ENCODE measurements at regions of chr16 and their contacts with region 1.

Region 1: DNA sequence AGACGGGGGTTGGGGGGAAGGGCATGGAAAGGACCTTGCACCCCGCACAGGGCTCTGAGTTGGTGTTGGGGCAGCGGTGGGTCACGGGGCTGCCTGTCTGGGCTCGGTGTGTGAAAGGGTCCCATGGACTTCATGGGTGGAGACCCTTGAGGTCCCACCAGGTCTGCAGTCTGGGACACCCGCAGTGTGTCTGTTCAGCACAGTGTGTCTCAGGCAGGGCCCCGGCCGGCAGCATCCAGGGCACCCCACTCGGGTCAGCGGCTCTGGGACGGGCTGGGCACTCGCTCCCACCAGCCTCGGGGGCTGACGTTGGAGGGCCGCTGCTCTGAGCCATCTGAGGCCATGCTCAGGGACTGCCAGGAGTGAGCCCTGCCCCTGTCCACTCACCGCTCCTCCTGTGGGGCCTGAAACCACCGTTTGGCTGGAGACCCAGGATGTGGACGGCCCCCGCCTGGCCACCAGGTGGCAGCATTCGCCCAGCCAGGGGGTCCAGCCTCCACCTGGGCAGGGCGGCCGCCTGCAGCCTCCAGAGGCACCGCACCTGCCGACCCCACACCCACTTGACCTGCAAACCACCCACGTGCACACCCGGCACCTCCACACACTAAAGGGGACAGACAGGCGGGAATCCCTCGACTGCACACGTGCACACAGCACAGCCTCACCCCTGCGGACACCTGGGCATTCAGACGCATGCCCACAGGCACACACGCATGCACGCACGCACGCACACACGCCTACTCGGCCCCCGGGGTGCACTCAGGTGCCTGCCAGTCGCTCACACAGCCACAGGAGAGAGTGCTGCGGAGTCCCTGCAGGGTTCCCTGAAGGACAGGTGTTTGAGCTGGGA is 10.1 kb upstream of the ZFPM1 start:
- DNase-seq: peak; percentile 83 to 91
- H3K4me3 ChIP-seq: no peak overlapping the region
- H3K27ac ChIP-seq: no peak overlapping the region
- H3K4me1 ChIP-seq: peaks cover 0 to 15% (median 10%) of the 10 kb centered on the region in 4 donors
- H3K27me3 ChIP-seq: peaks cover 0 to 50% (median 0%) of the 10 kb centered on the region in 3 donors
- CTCF ChIP-seq: peak in 5 of 7 experiments; percentile 89 to 99 (median 95)
- EP300 ChIP-seq: no peak
- POLR2A ChIP-seq: no peak

Region 2: DNA sequence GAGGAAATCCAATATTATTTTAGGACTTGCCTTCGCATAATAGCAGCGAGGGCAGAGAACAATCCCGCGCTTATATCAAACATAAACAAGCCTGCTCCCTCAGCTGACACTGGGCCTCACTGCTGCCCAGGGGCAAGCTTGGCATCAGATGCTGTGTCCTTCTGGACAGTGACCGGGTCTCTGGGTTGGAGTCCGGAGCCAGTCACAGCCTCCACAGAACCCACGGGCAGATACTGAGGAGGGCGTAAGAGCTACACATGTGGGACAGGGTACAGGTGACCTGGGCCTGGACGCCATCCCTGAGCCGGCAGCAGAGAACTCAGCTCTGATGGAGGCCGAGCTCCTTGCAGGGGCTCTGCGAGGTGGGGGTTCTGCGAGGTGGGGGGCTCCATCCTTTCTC is 74.9 kb before region 1 on chr16:
- intact Hi-C with region 1: no loop called
- DNase-seq: no peak
- H3K4me3 ChIP-seq: no peak overlapping the region
- H3K27ac ChIP-seq: no peak overlapping the region
- H3K4me1 ChIP-seq: no peaks in the 10 kb centered on the region
- H3K27me3 ChIP-seq: peaks cover 0 to 8% (median 0%) of the 10 kb centered on the region in 3 donors
- CTCF ChIP-seq: no peak
- EP300 ChIP-seq: no peak
- POLR2A ChIP-seq: no peak

Region 3: GRCh38 chr16:88505405-88506082 is 62.6 kb after region 1 on chr16:
- intact Hi-C with region 1: no loop called
- DNase-seq: peak; percentile 88 to 95
- H3K4me3 ChIP-seq: no peak overlapping the region
- H3K27ac ChIP-seq: peak overlapping the region; percentile 75 to 96 (median 87)
- H3K4me1 ChIP-seq: peaks cover 61 to 94% (median 85%) of the 10 kb centered on the region in 4 donors
- H3K27me3 ChIP-seq: peaks cover 0 to 16% (median 0%) of the 10 kb centered on the region in 3 donors
- CTCF ChIP-seq: peak in 5 of 7 experiments; percentile 51 to 77 (median 72)
- EP300 ChIP-seq: no peak
- POLR2A ChIP-seq: no peak

Region 4: GRCh38 chr16:88527186-88527936 is 84.4 kb after region 1 on chr16:
- intact Hi-C with region 1: loop called (anchors 10 kb)
- DNase-seq: peak; percentile 88 to 92
- H3K4me3 ChIP-seq: no peak overlapping the region
- H3K27ac ChIP-seq: peak overlapping the region; percentile 34 to 77 (median 67)
- H3K4me1 ChIP-seq: peaks cover 50 to 74% (median 61%) of the 10 kb centered on the region in 4 donors
- H3K27me3 ChIP-seq: peaks cover 0 to 43% (median 3%) of the 10 kb centered on the region in 3 donors
- CTCF ChIP-seq: peak in 5 of 7 experiments; percentile 80 to 93 (median 91)
- EP300 ChIP-seq: no peak
- POLR2A ChIP-seq: no peak

Region 5: GRCh38 chr16:88561485-88562369 is 118.8 kb after region 1 on chr16:
- intact Hi-C with region 1: loop called (anchors 2 kb)
- DNase-seq: peak; percentile 52 to 74
- H3K4me3 ChIP-seq: peak overlapping the region in 2 of 4 donors; percentile 26 to 31
- H3K27ac ChIP-seq: peak overlapping the region in 1 of 5 donors; percentile 38
- H3K4me1 ChIP-seq: peaks cover 4 to 18% (median 11%) of the 10 kb centered on the region in 4 donors
- H3K27me3 ChIP-seq: peaks cover 0 to 19% (median 0%) of the 10 kb centered on the region in 3 donors
- CTCF ChIP-seq: peak in 5 of 7 experiments; percentile 33 to 71 (median 56)
- EP300 ChIP-seq: no peak
- POLR2A ChIP-seq: no peak